ENCODE measurements at regions of chr15 and their contacts with region 1.

Region 1: GRCh38 chr15:90320061-90320884 is 31.8 kb upstream of the ZNF774 start:
- DNase-seq: peak; percentile 45
- ATAC-seq: peak; percentile 100
- H3K4me3 ChIP-seq: no peak overlapping the region
- H3K27ac ChIP-seq: no peak overlapping the region
- H3K4me1 ChIP-seq: no peaks in the 10 kb centered on the region
- H3K27me3 ChIP-seq: no peaks in the 10 kb centered on the region
- CTCF ChIP-seq: peak; percentile 98 to 99 (median 98); a peak in 5 of 6 replicates
- EP300 ChIP-seq: no peak
- POLR2A ChIP-seq: no peak
- RAD21 ChIP-seq: peak; percentile 93

Region 2: GRCh38 chr15:90291679-90292356 is 28.5 kb before region 1 on chr15:
- CTCF ChIA-PET with region 1: interaction called, 72 read pairs
- POLR2A ChIA-PET with region 1: no interaction called
- RAD21 ChIA-PET with region 1: interaction called, 14 read pairs
- SMC1A ChIA-PET with region 1: interaction called, 30 read pairs
- in situ Hi-C with region 1: no loop called
- intact Hi-C with region 1: no loop called
- DNase-seq: no peak
- ATAC-seq: peak; percentile 69
- H3K4me3 ChIP-seq: no peak overlapping the region
- H3K27ac ChIP-seq: no peak overlapping the region
- H3K4me1 ChIP-seq: no peaks in the 10 kb centered on the region
- H3K27me3 ChIP-seq: no peaks in the 10 kb centered on the region
- CTCF ChIP-seq: no peak
- EP300 ChIP-seq: no peak
- POLR2A ChIP-seq: no peak
- RAD21 ChIP-seq: no peak

Region 3: DNA sequence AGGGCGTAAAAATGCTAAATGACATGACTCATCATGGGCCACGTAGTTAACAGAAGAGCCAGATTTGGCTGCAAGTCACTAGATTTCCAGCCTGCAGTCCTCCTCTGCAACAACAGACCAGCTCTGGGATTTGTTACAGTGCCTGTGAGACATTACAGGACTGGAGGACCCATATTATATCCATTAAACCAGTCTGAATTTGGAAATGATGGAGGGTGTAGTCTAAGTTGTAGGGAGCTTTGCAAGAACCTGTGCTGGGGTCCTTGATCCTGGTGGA is 42.6 kb after region 1 on chr15:
- CTCF ChIA-PET with region 1: interaction called, 39 read pairs
- POLR2A ChIA-PET with region 1: no interaction called
- RAD21 ChIA-PET with region 1: interaction called, 7 read pairs
- SMC1A ChIA-PET with region 1: interaction called, 5 read pairs
- in situ Hi-C with region 1: no loop called
- intact Hi-C with region 1: no loop called
- DNase-seq: no peak
- ATAC-seq: no peak
- H3K4me3 ChIP-seq: no peak overlapping the region
- H3K27ac ChIP-seq: no peak overlapping the region
- H3K4me1 ChIP-seq: no peaks in the 10 kb centered on the region
- H3K27me3 ChIP-seq: no peaks in the 10 kb centered on the region
- CTCF ChIP-seq: no peak
- EP300 ChIP-seq: no peak
- POLR2A ChIP-seq: no peak
- RAD21 ChIP-seq: no peak

Region 4: GRCh38 chr15:90463381-90463780 is 143.1 kb after region 1 on chr15:
- CTCF ChIA-PET with region 1: interaction called, 23 read pairs
- POLR2A ChIA-PET with region 1: no interaction called
- RAD21 ChIA-PET with region 1: interaction called, 4 read pairs
- SMC1A ChIA-PET with region 1: interaction called, 9 read pairs
- in situ Hi-C with region 1: no loop called
- intact Hi-C with region 1: no loop called
- DNase-seq: no peak
- ATAC-seq: peak; percentile 88
- H3K4me3 ChIP-seq: no peak overlapping the region
- H3K27ac ChIP-seq: no peak overlapping the region
- H3K4me1 ChIP-seq: peaks cover 3% of the 10 kb centered on the region; the same call in 1 of the 2 replicates
- H3K27me3 ChIP-seq: no peaks in the 10 kb centered on the region
- CTCF ChIP-seq: no peak
- EP300 ChIP-seq: no peak
- POLR2A ChIP-seq: no peak
- RAD21 ChIP-seq: no peak

Region 5: DNA sequence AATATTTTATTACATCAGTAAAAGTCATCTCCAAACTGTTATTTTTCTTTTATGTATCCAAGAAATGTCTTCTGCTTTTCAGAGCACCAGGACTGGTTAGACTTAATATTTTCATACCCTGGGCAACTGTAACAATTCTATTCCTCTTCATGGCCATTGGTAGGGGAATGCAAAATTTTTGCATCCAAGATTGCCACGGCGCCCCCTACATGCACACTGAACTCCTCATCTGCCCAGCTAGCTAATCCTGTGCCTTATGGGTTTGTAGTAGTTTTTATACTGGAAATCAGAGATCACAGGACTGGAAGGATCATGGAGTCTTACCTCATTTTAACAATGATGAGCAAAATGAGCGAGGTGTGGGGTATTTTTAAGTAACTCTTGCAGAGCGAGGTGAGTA is 283.6 kb after region 1 on chr15:
- CTCF ChIA-PET with region 1: interaction called, 24 read pairs
- POLR2A ChIA-PET with region 1: no interaction called
- RAD21 ChIA-PET with region 1: interaction called, 9 read pairs
- SMC1A ChIA-PET with region 1: interaction called, 12 read pairs
- in situ Hi-C with region 1: no loop called
- intact Hi-C with region 1: loop called (anchors 5 kb)
- DNase-seq: no peak
- ATAC-seq: peak; percentile 77
- H3K4me3 ChIP-seq: no peak overlapping the region
- H3K27ac ChIP-seq: no peak overlapping the region
- H3K4me1 ChIP-seq: peaks cover 3% of the 10 kb centered on the region
- H3K27me3 ChIP-seq: no peaks in the 10 kb centered on the region
- CTCF ChIP-seq: peak; percentile 39 to 49 (median 41); a peak in 5 of 6 replicates
- EP300 ChIP-seq: no peak
- POLR2A ChIP-seq: no peak
- RAD21 ChIP-seq: peak; percentile 51

Region 6: GRCh38 chr15:90762109-90762508 is 441.8 kb after region 1 on chr15:
- CTCF ChIA-PET with region 1: no interaction called
- POLR2A ChIA-PET with region 1: no interaction called
- RAD21 ChIA-PET with region 1: no interaction called
- SMC1A ChIA-PET with region 1: interaction called, 3 read pairs
- in situ Hi-C with region 1: no loop called
- intact Hi-C with region 1: loop called (anchors 5 kb)
- DNase-seq: no peak
- ATAC-seq: no peak
- H3K4me3 ChIP-seq: no peak overlapping the region
- H3K27ac ChIP-seq: no peak overlapping the region
- H3K4me1 ChIP-seq: no peaks in the 10 kb centered on the region
- H3K27me3 ChIP-seq: no peaks in the 10 kb centered on the region
- CTCF ChIP-seq: no peak
- EP300 ChIP-seq: no peak
- POLR2A ChIP-seq: no peak
- RAD21 ChIP-seq: no peak

Measured in GM12878 (cell line).